Pancreas (tissue), 10 donors: ENCODE measurements at regions of chr2 and their contacts with region 1.

Region 1: GRCh38 chr2:6352906-6353515 is 512.7 kb downstream of the CMPK2 start:
- DNase-seq: peak; percentile 25 to 81 (median 78)
- ATAC-seq: peak; percentile 82 to 96 (median 94)
- H3K4me3 ChIP-seq: no peak overlapping the region
- H3K27ac ChIP-seq: no peak overlapping the region
- H3K4me1 ChIP-seq: no peaks in the 10 kb centered on the region
- H3K27me3 ChIP-seq: no peaks in the 10 kb centered on the region
- CTCF ChIP-seq: peak; percentile 44 to 77 (median 62)

Region 2: DNA sequence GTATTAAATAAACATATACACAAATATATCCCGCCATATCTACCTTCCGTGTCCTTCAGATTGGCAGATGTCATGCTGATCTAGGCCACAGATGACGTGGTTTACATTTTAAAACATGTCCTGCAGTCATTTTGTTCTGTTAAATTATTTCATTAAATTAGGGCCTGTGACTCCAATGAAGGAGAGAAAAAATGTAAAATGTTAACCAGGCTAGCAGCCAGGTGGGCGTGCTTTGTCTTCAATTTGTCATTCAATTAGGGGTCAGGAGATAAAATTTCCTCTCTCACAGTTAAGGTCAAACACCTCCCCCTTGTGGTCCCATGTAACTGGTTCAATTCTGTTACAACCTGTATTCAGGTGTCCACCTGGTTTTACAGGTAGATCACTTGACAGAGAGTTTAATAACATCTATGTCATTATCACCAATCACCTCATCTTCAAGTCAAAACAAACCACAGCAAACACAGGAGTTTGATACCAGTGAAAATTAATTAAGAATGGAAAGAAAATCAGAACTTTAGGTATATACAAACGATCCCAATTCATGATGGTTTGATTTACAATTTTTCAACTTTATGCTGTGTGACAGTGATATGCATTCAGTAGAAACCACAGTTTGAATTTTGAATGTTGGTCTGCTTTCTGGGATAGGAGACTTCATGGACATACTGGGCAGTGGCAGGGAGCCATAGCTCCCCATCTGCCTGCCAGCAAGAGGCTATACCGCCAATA is 173.2 kb after region 1 on chr2:
- intact Hi-C with region 1: loop called in 1 of 3 experiments (anchors 5 kb)
- DNase-seq: peak in 3 of 6 donors; percentile 31 to 54 (median 37)
- ATAC-seq: peak; percentile 73 to 89 (median 81)
- H3K4me3 ChIP-seq: no peak overlapping the region
- H3K27ac ChIP-seq: no peak overlapping the region
- H3K4me1 ChIP-seq: peaks cover 12 to 22% (median 18%) of the 10 kb centered on the region in 3 donors
- H3K27me3 ChIP-seq: no peaks in the 10 kb centered on the region
- CTCF ChIP-seq: peak in 3 of 4 donors; percentile 15 to 51 (median 48)

Region 3: GRCh38 chr2:6764968-6765723 is 412.1 kb after region 1 on chr2:
- intact Hi-C with region 1: loop called in 2 of 3 experiments (anchors 5 to 10 kb)
- DNase-seq: no peak
- ATAC-seq: no peak
- H3K4me3 ChIP-seq: no peak overlapping the region
- H3K27ac ChIP-seq: no peak overlapping the region
- H3K4me1 ChIP-seq: no peaks in the 10 kb centered on the region
- H3K27me3 ChIP-seq: no peaks in the 10 kb centered on the region
- CTCF ChIP-seq: no peak

Region 4: DNA sequence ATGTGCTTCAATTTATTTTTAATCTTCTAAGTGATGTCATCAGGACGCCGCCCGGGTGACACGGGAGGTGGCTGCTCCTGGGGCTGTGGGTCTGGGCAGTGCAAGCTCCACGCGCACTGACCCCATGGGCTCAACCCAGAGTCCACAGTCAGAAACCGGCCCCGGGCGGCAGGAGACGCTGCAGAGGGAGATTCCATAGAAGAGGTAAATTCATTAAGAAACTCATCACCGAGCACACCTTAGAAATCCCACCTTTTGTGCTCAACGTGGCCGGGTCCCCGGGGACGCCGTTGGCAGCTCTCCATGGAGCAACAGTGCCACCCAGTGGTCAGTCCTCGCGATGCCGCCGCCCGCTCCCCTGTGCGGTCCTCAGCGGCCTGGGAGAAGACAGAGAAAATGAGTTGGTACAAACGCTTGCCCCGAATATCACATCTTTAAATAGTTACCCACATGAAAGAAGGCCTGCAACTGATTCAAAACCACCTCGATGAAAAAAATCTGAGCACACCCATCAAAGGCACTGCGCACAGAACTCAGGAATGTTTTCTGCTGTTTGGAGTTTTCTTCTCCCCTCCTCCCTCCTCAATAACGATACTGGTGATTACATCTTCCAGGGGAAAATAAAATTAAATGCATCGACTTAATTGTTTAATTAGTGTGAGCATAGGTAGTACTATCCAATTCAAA is 420.1 kb after region 1 on chr2:
- intact Hi-C with region 1: loop called in 2 of 3 experiments (anchors 5 to 10 kb)
- DNase-seq: peak; percentile 20 to 93 (median 64)
- ATAC-seq: peak; percentile 88 to 97 (median 96)
- H3K4me3 ChIP-seq: peak overlapping the region in 1 of 4 donors; percentile 9
- H3K27ac ChIP-seq: no peak overlapping the region
- H3K4me1 ChIP-seq: no peaks in the 10 kb centered on the region
- H3K27me3 ChIP-seq: peaks cover 0 to 21% (median 2%) of the 10 kb centered on the region in 4 donors
- CTCF ChIP-seq: peak; percentile 88 to 97 (median 94)